Activated T-helper 1 cell treated with anti-CD3 and anti-CD28 coated beads, Interleukin-12 subunit alpha, Interleukin-12 subunit beta, Interleukin-2, Interleukin-4 antibody, amounts not matched to agents 30 ng/mL and 10 ng/mL and 1 ng/mL, durations not matched to agents 14 hours and 24 hours and 36 hours (primary cell): ENCODE measurements at regions of chr1 and their contacts with region 1.

Region 1: GRCh38 chr1:107820805-107821204 is 144.2 kb downstream of the VAV3 start:
- DNase-seq: no peak
- H3K4me3 Mint-ChIP-seq: no peak overlapping the region
- H3K27ac Mint-ChIP-seq: no peak overlapping the region
- H3K4me1 Mint-ChIP-seq: peaks cover 16% of the 10 kb centered on the region
- H3K27me3 Mint-ChIP-seq: peaks cover 6% of the 10 kb centered on the region

Region 2: DNA sequence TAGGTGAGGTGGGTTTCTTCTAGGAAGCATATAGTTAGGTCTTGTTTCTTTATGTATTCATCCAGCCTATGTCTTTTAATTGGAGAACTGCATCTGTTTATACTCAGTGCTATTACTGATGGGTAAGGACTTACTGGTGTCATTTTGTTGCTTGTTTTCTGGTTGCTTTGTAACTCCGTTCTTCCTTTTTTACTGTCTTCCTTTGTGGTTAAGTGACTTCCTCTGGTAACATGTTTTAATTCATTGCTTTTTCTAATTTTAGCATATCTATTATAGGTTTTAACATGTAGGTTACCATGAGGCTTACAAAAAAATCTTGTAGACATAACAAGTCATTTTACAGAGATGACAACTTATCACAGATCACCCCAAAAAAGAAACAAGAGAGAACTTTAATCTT is 16.7 kb before region 1 on chr1:
- intact Hi-C with region 1: loop called (anchors 2 kb)
- DNase-seq: no peak
- H3K4me3 Mint-ChIP-seq: peak overlapping the region; percentile 8
- H3K27ac Mint-ChIP-seq: no peak overlapping the region
- H3K4me1 Mint-ChIP-seq: peaks cover 33% of the 10 kb centered on the region
- H3K27me3 Mint-ChIP-seq: peaks cover 4% of the 10 kb centered on the region

Region 3: GRCh38 chr1:107870696-107871095 is 49.9 kb after region 1 on chr1:
- intact Hi-C with region 1: loop called (anchors 5 kb)
- DNase-seq: no peak
- H3K4me3 Mint-ChIP-seq: no peak overlapping the region
- H3K27ac Mint-ChIP-seq: no peak overlapping the region
- H3K4me1 Mint-ChIP-seq: peaks cover 10% of the 10 kb centered on the region
- H3K27me3 Mint-ChIP-seq: no peaks in the 10 kb centered on the region